ENCODE measurements at regions of chr19 and their contacts with region 1.

Region 1: GRCh38 chr19:11949201-11949600 is 15.6 kb upstream of the ZNF763 start:
- DNase-seq: no peak
- H3K4me3 ChIP-seq: no peak overlapping the region; a peak in 1 of 4 replicates
- H3K27ac ChIP-seq: no peak overlapping the region
- H3K4me1 ChIP-seq: no peaks in the 10 kb centered on the region
- H3K27me3 ChIP-seq: no peaks in the 10 kb centered on the region
- CTCF ChIP-seq: no peak
- EP300 ChIP-seq: no peak
- RAD21 ChIP-seq: no peak

Region 2: GRCh38 chr19:11964858-11965645 is 15.9 kb after region 1 on chr19 and contains the start of gene ZNF763:
- CTCF ChIA-PET with region 1: interaction called, 17 read pairs
- POLR2A ChIA-PET with region 1: no interaction called
- DNase-seq: peak; percentile 92
- H3K4me3 ChIP-seq: peak within 1 kb of the TSS; percentile 65
- H3K27ac ChIP-seq: peak within 1 kb of the TSS; percentile 30 to 72
- H3K4me1 ChIP-seq: peaks cover 0 to 7% of the 10 kb centered on the region in 2 experiments; a peak in 1 of 4 replicates
- H3K27me3 ChIP-seq: no peaks in the 10 kb centered on the region
- CTCF ChIP-seq: no peak
- EP300 ChIP-seq: no peak
- RAD21 ChIP-seq: no peak
- polyA plus RNA-seq, gene ZNF763: 0.55 and 0.72 TPM in 2 replicates

Measured in SK-N-SH (cell line).